ENCODE measurements at regions of chr15 and their contacts with region 1.

Region 1: GRCh38 chr15:40906091-40906990 is 12.1 kb downstream of the VPS18 start:
- DNase-seq: peak; percentile 79 to 96
- H3K4me3 ChIP-seq: peak overlapping the region; percentile 1
- CTCF ChIP-seq: peak in 1 of 3 donors; percentile 18
- POLR2A ChIP-seq: no peak

Region 2: GRCh38 chr15:40974879-40975278 is 68.5 kb after region 1 on chr15:
- intact Hi-C with region 1: no loop called
- DNase-seq: no peak
- H3K4me3 ChIP-seq: no peak overlapping the region
- CTCF ChIP-seq: no peak
- POLR2A ChIP-seq: no peak

Region 3: GRCh38 chr15:41022487-41023090 is 116.2 kb after region 1 on chr15:
- intact Hi-C with region 1: loop called (anchors 5 kb)
- DNase-seq: peak in 1 of 2 donors; percentile 71
- H3K4me3 ChIP-seq: no peak overlapping the region
- CTCF ChIP-seq: no peak
- POLR2A ChIP-seq: no peak

Region 4: DNA sequence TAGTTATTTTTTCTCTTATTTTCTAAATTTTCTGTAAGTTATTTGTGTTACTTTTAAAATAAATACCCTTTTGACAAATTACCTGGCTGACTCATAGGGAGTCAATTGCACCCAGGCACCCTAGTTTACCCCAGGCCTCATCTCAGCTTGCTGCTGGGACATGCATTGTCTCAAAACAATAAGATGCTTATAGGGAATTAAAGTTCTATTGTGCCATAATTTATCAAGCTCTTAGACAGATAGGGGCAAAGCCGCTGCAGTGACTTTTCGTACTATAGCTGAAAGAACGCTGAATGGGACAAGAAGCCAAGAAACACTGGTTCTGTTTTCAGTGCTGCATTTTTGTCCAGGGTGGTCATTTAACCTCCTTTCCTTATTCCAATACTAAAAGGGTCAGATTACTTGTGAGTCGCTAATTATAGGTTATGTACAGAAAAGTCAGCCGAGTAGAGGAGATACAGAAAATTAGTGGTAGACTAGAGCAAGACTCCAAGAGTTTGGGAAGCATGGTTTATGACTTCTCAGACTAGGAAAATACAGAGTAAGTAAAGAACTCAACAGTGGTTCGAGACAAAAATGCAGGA is 274.0 kb after region 1 on chr15:
- intact Hi-C with region 1: loop called (anchors 10 kb)
- DNase-seq: no peak
- H3K4me3 ChIP-seq: no peak overlapping the region
- CTCF ChIP-seq: no peak
- POLR2A ChIP-seq: no peak

Region 5: DNA sequence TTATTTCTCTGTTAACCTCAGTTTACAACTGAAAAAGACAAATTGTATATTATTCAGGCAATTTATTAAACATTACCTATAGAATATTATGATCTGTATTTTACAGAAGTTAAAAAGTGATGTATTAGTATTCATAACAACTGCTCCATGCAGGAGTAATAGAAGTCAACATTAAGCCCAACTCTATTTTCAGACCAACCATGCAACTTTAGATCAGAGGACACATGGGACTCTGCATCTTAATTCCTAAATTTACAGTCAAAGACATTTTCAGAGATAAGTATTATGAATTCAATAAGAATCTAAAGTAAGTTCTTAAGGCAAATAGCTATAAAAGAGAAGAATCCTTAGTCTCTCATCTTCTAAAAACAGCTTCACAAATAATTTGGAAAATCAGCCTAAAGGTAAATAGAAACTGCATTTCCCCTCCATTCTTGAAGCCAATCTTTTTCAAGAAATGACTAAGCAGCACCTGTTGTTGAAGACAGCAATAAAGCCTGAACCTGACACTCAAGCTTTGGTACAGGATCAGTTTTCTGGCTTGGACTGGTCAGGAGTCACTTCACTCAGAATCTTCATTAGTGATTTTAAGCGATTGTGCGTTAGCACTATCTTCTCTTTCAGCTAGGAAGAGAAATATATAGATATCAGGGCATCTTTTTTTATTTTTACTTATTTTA is 403.0 kb after region 1 on chr15:
- intact Hi-C with region 1: no loop called
- DNase-seq: no peak
- H3K4me3 ChIP-seq: no peak overlapping the region
- CTCF ChIP-seq: no peak
- POLR2A ChIP-seq: no peak

Measured in lower leg skin (tissue), 4 donors.